Esophagus muscularis mucosa (tissue), 4 donors: ENCODE measurements at regions of chr6 and their contacts with region 1.

Region 1: GRCh38 chr6:7140631-7141378 is 33.0 kb downstream of the RREB1 start:
- DNase-seq: peak; percentile 99
- H3K4me3 ChIP-seq: peak overlapping the region; percentile 64 to 71 (median 66)
- H3K27ac ChIP-seq: peak overlapping the region; percentile 92 to 97 (median 94)
- H3K4me1 ChIP-seq: peaks cover 72 to 86% (median 84%) of the 10 kb centered on the region in 4 donors
- H3K27me3 ChIP-seq: no peaks in the 10 kb centered on the region
- CTCF ChIP-seq: no peak
- EP300 ChIP-seq: no peak
- POLR2A ChIP-seq: peak; percentile 69

Region 2: DNA sequence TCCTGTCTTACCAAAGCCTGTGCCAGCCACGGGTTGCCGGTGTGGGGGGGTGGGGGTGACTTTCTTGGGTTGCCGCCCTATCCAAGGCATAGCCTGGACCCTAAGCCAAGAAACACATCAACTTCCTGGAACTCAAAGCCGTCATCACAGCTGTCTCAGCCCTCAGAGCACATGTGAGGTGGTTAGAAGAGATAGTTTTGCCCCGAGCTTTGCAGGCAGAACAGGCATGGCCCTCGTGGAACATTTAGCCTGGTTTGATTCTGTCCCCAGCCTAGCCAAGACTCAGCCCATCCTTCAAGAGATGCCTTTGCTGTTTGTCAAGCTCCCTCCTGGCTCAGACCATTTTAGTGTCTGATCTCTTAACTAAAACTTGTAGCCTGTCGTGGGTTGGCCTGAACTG is 31.8 kb after region 1 on chr6:
- intact Hi-C with region 1: loop called (anchors 5 kb)
- DNase-seq: no peak
- H3K4me3 ChIP-seq: no peak overlapping the region
- H3K27ac ChIP-seq: peak overlapping the region in 2 of 4 donors; percentile 17 to 27
- H3K4me1 ChIP-seq: peaks cover 75 to 92% (median 77%) of the 10 kb centered on the region in 4 donors
- H3K27me3 ChIP-seq: no peaks in the 10 kb centered on the region
- CTCF ChIP-seq: no peak
- EP300 ChIP-seq: no peak
- POLR2A ChIP-seq: no peak